Heart right ventricle (tissue), 16 donors: ENCODE measurements at regions of chr7 and their contacts with region 1.

Region 1: GRCh38 chr7:77839919-77840318 is 41.3 kb downstream of the PHTF2 start:
- DNase-seq: no peak
- ATAC-seq: no peak
- H3K4me3 ChIP-seq: no peak overlapping the region
- H3K27ac ChIP-seq: no peak overlapping the region
- H3K4me1 ChIP-seq: peaks cover 0 to 32% (median 11%) of the 10 kb centered on the region in 9 donors
- H3K27me3 ChIP-seq: no peaks in the 10 kb centered on the region
- CTCF ChIP-seq: no peak

Region 2: GRCh38 chr7:77797734-77798393 is 42.1 kb before region 1 on chr7:
- intact Hi-C with region 1: no loop called
- DNase-seq: no peak
- ATAC-seq: peak; percentile 9 to 50 (median 24)
- H3K4me3 ChIP-seq: peak overlapping the region; percentile 72 to 95 (median 88)
- H3K27ac ChIP-seq: peak overlapping the region; percentile 55 to 92 (median 84)
- H3K4me1 ChIP-seq: peaks cover 7 to 61% (median 33%) of the 10 kb centered on the region in 9 donors
- H3K27me3 ChIP-seq: no peaks in the 10 kb centered on the region
- CTCF ChIP-seq: no peak

Region 3: GRCh38 chr7:77808517-77808916 is 31.4 kb before region 1 on chr7:
- intact Hi-C with region 1: loop called in 1 of 10 experiments (anchors 5 kb)
- DNase-seq: no peak
- ATAC-seq: no peak
- H3K4me3 ChIP-seq: no peak overlapping the region
- H3K27ac ChIP-seq: no peak overlapping the region
- H3K4me1 ChIP-seq: peaks cover 0 to 26% (median 6%) of the 10 kb centered on the region in 9 donors
- H3K27me3 ChIP-seq: no peaks in the 10 kb centered on the region
- CTCF ChIP-seq: no peak

Region 4: DNA sequence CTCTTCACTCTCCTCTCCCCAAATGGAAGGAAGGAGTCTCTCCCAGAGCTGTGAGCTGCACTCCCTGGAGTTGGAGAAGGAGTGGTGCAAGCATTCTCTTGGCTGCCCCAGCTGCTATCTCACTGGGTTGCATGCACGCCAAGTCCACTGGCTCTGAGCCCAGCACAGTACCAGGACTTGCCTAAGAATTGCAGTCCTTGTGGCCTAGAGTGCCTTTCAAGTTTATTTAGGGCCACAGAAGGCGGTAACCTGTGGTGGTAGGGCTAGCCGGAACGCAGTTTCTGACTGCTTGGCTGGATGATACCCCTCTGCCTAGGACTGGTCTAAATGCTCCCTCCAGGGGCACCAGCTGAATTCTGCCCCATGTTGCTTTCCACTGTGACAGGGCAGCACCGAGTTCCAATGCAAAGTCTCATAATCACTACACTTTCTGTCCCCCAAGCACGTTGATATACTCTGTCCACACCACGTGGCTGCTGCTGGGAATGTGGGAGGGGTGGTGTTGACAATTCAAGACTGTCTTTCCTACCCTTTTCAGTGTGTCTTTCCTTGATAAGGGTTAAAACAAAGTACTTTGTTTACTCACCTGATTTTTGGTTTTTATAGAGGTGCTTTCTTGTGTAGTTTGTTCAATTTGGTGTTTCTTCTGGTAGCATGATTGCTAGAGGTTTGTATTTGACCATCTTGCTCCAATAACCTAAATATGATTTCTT is 15.6 kb after region 1 on chr7:
- intact Hi-C with region 1: no loop called
- DNase-seq: peak; percentile 46 to 70
- ATAC-seq: peak in 7 of 8 donors; percentile 34 to 94 (median 88)
- H3K4me3 ChIP-seq: no peak overlapping the region
- H3K27ac ChIP-seq: no peak overlapping the region
- H3K4me1 ChIP-seq: peaks cover 0 to 16% (median 0%) of the 10 kb centered on the region in 9 donors
- H3K27me3 ChIP-seq: no peaks in the 10 kb centered on the region
- CTCF ChIP-seq: no peak